CD8-positive, alpha-beta T cell (primary cell): ENCODE measurements at regions of chr3 and their contacts with region 1.

Region 1: DNA sequence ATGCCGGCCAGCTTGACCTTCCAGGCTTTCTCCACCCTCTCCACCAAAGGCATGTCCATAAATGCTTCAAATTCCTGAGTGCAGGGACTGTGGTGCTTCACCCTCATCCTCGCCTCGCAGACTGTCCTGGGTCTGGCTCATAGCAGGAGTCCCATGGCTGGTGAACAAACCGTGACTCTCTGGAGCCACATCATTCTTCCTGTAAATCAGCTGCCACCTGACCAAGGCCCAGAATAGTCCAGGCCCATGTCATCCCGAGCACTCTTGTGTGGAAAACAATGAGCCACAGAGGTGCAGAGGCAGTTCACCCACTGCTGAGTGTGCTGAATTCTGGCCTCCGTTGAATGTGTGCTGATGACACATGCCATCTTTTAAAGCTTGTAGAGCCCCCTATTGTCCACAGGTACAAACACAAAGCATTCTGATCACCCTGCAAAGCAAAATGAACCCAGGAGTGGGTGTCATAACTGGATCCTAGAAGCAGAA is 68.6 kb downstream of the ABHD5 start:
- DNase-seq: peak in 2 of 9 experiments; percentile 25 to 37
- ATAC-seq: peak; percentile 43
- H3K4me3 ChIP-seq: no peak overlapping the region
- H3K4me3 Mint-ChIP-seq: no peak overlapping the region
- H3K27ac ChIP-seq: no peak overlapping the region
- H3K27ac Mint-ChIP-seq: no peak overlapping the region
- H3K4me1 ChIP-seq: peaks cover 40% of the 10 kb centered on the region
- H3K4me1 Mint-ChIP-seq: peaks cover 52% of the 10 kb centered on the region
- H3K27me3 ChIP-seq: no peaks in the 10 kb centered on the region
- H3K27me3 Mint-ChIP-seq: no peaks in the 10 kb centered on the region
- CTCF ChIP-seq: no peak

Region 2: GRCh38 chr3:43690400-43691119 is 68.8 kb before region 1 on chr3 and contains the start of gene ABHD5:
- CTCF ChIA-PET with region 1: no interaction called
- POLR2A ChIA-PET with region 1: interaction called, 4 read pairs
- intact Hi-C with region 1: loop called (anchors 1 to 5 kb)
- DNase-seq: peak; percentile 93 to 99 (median 96)
- ATAC-seq: peak; percentile 90
- H3K4me3 ChIP-seq: peak within 1 kb of the TSS; percentile 72 to 77
- H3K4me3 Mint-ChIP-seq: peak within 1 kb of the TSS; percentile 91
- H3K27ac ChIP-seq: peak within 1 kb of the TSS; percentile 62 to 83
- H3K27ac Mint-ChIP-seq: peak within 1 kb of the TSS; percentile 91
- H3K4me1 ChIP-seq: peaks cover 15% of the 10 kb centered on the region
- H3K4me1 Mint-ChIP-seq: peaks cover 32% of the 10 kb centered on the region
- H3K27me3 ChIP-seq: no peaks in the 10 kb centered on the region
- H3K27me3 Mint-ChIP-seq: no peaks in the 10 kb centered on the region
- CTCF ChIP-seq: peak; percentile 44
- total RNA-seq, gene ABHD5: 10.3 to 11.4 TPM

Region 3: GRCh38 chr3:43769471-43770425 is 10.4 kb after region 1 on chr3:
- CTCF ChIA-PET with region 1: interaction called, 11 read pairs
- POLR2A ChIA-PET with region 1: interaction called, 3 read pairs
- intact Hi-C with region 1: no loop called
- DNase-seq: peak; percentile 56 to 86 (median 73)
- ATAC-seq: peak; percentile 67
- H3K4me3 ChIP-seq: no peak overlapping the region
- H3K4me3 Mint-ChIP-seq: peak overlapping the region; percentile 1
- H3K27ac ChIP-seq: no peak overlapping the region
- H3K27ac Mint-ChIP-seq: no peak overlapping the region
- H3K4me1 ChIP-seq: peaks cover 8% of the 10 kb centered on the region
- H3K4me1 Mint-ChIP-seq: peaks cover 22% of the 10 kb centered on the region
- H3K27me3 ChIP-seq: no peaks in the 10 kb centered on the region
- H3K27me3 Mint-ChIP-seq: peaks cover 9% of the 10 kb centered on the region
- CTCF ChIP-seq: peak; percentile 81